PC-3 (cell line): ENCODE measurements at regions of chr1 and their contacts with region 1.

Region 1: GRCh38 chr1:228457396-228458176 is 29.6 kb upstream of the RNF187 start:
- DNase-seq: peak; percentile 100
- ATAC-seq: peak; percentile 86
- H3K4me3 ChIP-seq: peak overlapping the region; percentile 87
- H3K27ac ChIP-seq: peak overlapping the region; percentile 64
- H3K4me1 ChIP-seq: peaks cover 15% of the 10 kb centered on the region; the same call in 1 of the 2 replicates
- H3K27me3 ChIP-seq: no peaks in the 10 kb centered on the region
- CTCF ChIP-seq: peak; percentile 56

Region 2: GRCh38 chr1:228212966-228213844 is 244.4 kb before region 1 on chr1:
- CTCF ChIA-PET with region 1: no interaction called
- POLR2A ChIA-PET with region 1: no interaction called
- intact Hi-C with region 1: loop called (anchors 2 kb)
- DNase-seq: peak; percentile 89
- ATAC-seq: peak; percentile 91
- H3K4me3 ChIP-seq: peak overlapping the region; percentile 78
- H3K27ac ChIP-seq: peak overlapping the region; percentile 31; the same call in 1 of the 2 replicates
- H3K4me1 ChIP-seq: no peaks in the 10 kb centered on the region
- H3K27me3 ChIP-seq: no peaks in the 10 kb centered on the region
- CTCF ChIP-seq: peak; percentile 64

Region 3: DNA sequence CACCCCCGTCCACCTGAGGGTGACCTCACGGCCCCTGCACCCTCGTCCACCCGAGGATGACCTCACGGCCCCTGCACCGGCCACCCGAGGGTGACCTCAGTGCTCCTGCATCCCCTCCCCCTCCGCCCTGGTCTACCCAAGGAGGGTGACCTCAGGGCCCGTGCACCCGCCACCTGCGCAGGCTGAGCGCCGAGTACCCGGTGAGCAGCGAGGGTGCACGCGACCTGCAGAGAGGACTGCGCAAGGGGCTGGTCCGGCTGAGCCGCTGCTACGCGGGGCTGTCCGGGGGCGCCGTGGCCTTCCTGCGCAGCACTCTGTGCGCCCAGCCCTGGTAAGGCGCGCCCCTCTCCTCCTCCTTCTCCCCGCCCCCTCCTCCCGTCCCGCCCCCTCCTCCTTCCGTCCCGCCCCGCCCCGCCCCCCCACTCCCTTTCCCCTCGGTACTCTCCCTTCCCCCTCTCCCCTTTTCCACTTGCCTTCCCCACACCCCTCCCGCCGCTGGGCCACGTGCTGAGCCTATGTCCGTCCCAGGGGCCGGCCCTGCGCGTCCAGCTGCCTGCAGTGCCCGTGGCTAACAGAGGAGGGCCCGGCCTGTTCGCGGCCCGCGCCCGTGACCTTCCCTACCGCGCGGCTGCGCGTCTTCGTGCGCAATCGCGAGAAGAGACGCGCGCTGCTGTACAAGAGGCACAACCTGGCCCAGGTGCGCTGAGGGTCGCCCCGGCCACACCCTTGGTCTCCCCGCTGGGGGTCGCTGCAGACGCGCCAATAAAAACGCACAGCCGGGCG is 79.3 kb before region 1 on chr1:
- CTCF ChIA-PET with region 1: interaction called, 7 read pairs
- POLR2A ChIA-PET with region 1: interaction called, 3 read pairs
- intact Hi-C with region 1: loop called (anchors 2 kb)
- DNase-seq: peak; percentile 62
- ATAC-seq: peak; percentile 76
- H3K4me3 ChIP-seq: peak overlapping the region; percentile 68
- H3K27ac ChIP-seq: no peak overlapping the region
- H3K4me1 ChIP-seq: peaks cover 19% of the 10 kb centered on the region
- H3K27me3 ChIP-seq: no peaks in the 10 kb centered on the region
- CTCF ChIP-seq: peak; percentile 76

Region 4: GRCh38 chr1:228405987-228406265 is 51.7 kb before region 1 on chr1:
- CTCF ChIA-PET with region 1: no interaction called
- POLR2A ChIA-PET with region 1: no interaction called
- intact Hi-C with region 1: loop called (anchors 1 kb)
- DNase-seq: no peak
- ATAC-seq: peak; percentile 19
- H3K4me3 ChIP-seq: peak overlapping the region; percentile 88
- H3K27ac ChIP-seq: peak overlapping the region; percentile 57
- H3K4me1 ChIP-seq: peaks cover 28% of the 10 kb centered on the region
- H3K27me3 ChIP-seq: no peaks in the 10 kb centered on the region
- CTCF ChIP-seq: no peak

Region 5: DNA sequence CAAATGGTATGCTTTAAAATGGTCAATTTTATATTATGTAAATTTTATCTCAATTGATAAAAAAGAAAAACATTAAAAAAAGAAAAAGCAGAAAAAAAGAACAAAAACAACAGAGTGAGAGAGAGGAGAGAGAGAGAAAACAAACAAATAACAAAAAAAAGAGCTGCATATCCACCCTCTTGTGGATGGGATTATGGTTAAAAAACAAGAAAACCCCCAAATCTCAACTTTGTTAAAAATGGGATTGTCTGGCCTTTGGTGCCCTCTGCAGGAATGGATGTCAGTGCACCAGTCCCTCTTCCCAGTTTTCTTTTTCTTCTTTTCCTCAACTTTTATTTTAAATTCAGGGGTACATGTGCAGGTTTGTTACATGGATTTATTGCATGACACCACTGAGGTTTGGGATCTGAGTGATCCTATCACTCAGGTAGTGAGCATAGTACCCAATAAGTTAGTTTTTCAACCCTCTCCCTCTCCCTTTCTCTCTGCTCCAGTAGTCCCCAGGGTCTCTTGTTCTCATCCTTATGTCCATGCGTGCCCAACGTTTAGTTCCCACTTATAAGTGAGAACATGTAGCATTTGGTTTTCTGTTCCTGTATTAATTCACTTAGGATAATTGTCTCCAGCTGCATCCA is 57.7 kb after region 1 on chr1:
- CTCF ChIA-PET with region 1: interaction called, 3 read pairs
- POLR2A ChIA-PET with region 1: no interaction called
- intact Hi-C with region 1: loop called (anchors 2 kb)
- DNase-seq: peak; percentile 68
- ATAC-seq: peak; percentile 59
- H3K4me3 ChIP-seq: no peak overlapping the region
- H3K27ac ChIP-seq: no peak overlapping the region
- H3K4me1 ChIP-seq: no peaks in the 10 kb centered on the region
- H3K27me3 ChIP-seq: peaks cover 42% of the 10 kb centered on the region
- CTCF ChIP-seq: peak; percentile 90

Region 6: GRCh38 chr1:228902781-228903433 is 445.3 kb after region 1 on chr1:
- CTCF ChIA-PET with region 1: no interaction called
- POLR2A ChIA-PET with region 1: no interaction called
- intact Hi-C with region 1: no loop called
- DNase-seq: peak; percentile 99
- ATAC-seq: peak; percentile 93
- H3K4me3 ChIP-seq: no peak overlapping the region
- H3K27ac ChIP-seq: no peak overlapping the region
- H3K4me1 ChIP-seq: peaks cover 14% of the 10 kb centered on the region
- H3K27me3 ChIP-seq: peaks cover 66% of the 10 kb centered on the region
- CTCF ChIP-seq: no peak